Mammary epithelial cell (primary cell): ENCODE measurements at regions of chr14 and their contacts with region 1.

Region 1: GRCh38 chr14:55051426-55052268 is at the start of gene MAPK1IP1L:
- DNase-seq: peak; percentile 96
- H3K4me3 ChIP-seq: peak within 1 kb of the TSS; percentile 93 to 100 (median 97)
- H3K27ac ChIP-seq: peak within 1 kb of the TSS; percentile 99
- H3K4me1 ChIP-seq: peaks cover 22% of the 10 kb centered on the region
- H3K27me3 ChIP-seq: no peaks in the 10 kb centered on the region
- CTCF ChIP-seq: peak; percentile 87 to 96
- total RNA-seq, gene MAPK1IP1L: 48.2 to 108 TPM

Region 2: GRCh38 chr14:55026793-55027561 is 24.7 kb before region 1 on chr14 and contains the starts of genes SOCS4 and WDHD1:
- CTCF ChIA-PET with region 1: interaction called, 4 read pairs
- dilution Hi-C with region 1: no loop called
- in situ Hi-C with region 1: no loop called
- intact Hi-C with region 1: loop called (anchors 1 kb)
- DNase-seq: peak; percentile 94
- H3K4me3 ChIP-seq: peak within 1 kb of the TSS; percentile 86 to 98 (median 95)
- H3K27ac ChIP-seq: peak within 1 kb of the TSS; percentile 98
- H3K4me1 ChIP-seq: peaks cover 16% of the 10 kb centered on the region
- H3K27me3 ChIP-seq: no peaks in the 10 kb centered on the region
- CTCF ChIP-seq: no peak
- total RNA-seq, gene SOCS4: 25.2 to 35.4 TPM
- total RNA-seq, gene WDHD1: 7.7 to 21.1 TPM

Region 3: DNA sequence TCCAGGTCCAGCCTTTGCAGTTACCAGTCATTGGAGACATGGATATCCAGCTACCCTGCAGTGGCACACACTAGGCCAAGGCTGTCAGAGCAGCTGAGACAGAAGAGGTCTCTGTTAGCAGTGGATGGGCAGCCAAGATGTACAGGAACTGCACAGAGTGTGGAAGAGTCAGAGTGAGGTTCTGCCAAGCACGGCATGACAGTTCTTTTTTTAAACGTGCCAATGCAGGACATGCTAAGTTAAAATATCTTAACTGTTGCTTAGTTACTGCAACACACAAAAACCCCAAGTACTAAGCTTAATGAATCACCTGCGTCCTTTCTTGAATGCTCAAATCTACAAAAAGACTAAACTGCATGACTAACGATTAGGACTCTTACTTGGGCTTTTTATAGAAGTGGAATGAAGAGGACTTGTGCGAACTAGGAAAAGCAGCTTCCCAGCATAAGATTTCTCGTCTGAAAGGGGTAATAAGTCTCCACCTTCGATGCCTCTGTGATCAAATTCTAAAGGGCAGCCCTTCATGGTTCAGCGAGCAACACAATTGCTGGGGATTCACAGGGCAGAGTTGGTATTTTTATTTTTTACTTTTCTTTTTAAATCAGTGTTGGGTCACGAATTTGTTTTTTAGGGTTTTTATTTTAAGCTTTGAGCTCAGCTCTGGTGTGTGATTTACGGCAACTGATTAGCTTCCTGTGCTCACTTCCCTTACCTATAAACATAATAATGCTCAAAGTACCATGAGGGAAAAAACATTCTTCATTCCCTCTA is 20.4 kb after region 1 on chr14:
- CTCF ChIA-PET with region 1: interaction called, 11 read pairs
- dilution Hi-C with region 1: no loop called
- in situ Hi-C with region 1: no loop called
- intact Hi-C with region 1: loop called (anchors 1 kb)
- DNase-seq: peak; percentile 95
- H3K4me3 ChIP-seq: peak overlapping the region in 1 of 3 experiments; percentile 28
- H3K27ac ChIP-seq: peak overlapping the region; percentile 99
- H3K4me1 ChIP-seq: peaks cover 42% of the 10 kb centered on the region
- H3K27me3 ChIP-seq: no peaks in the 10 kb centered on the region
- CTCF ChIP-seq: no peak

Region 4: DNA sequence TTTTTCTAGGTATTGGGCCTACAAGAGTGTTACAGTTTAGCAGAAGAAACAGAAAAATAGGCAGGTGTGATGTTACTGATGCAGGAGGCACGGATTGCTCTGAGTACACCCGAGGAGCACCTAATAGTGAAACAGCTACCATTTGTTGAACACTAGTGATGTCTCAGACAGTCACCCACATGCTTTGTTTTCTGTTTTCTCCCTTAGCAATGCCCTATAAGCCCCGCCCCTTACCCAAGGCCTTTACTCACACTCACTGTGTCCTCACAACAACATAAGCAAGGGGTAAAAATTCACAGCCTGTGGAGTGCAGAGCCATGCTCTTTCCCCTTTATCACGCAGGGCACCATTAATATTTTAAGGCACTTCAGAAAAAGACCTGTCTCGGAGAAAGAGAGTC is 25.5 kb after region 1 on chr14:
- CTCF ChIA-PET with region 1: interaction called, 11 read pairs
- dilution Hi-C with region 1: no loop called
- in situ Hi-C with region 1: no loop called
- intact Hi-C with region 1: loop called (anchors 1 kb)
- DNase-seq: peak; percentile 83
- H3K4me3 ChIP-seq: no peak overlapping the region
- H3K27ac ChIP-seq: peak overlapping the region; percentile 100
- H3K4me1 ChIP-seq: peaks cover 42% of the 10 kb centered on the region
- H3K27me3 ChIP-seq: no peaks in the 10 kb centered on the region
- CTCF ChIP-seq: no peak

Region 5: GRCh38 chr14:55097881-55098560 is 46.4 kb after region 1 on chr14:
- CTCF ChIA-PET with region 1: no interaction called
- dilution Hi-C with region 1: no loop called
- in situ Hi-C with region 1: no loop called
- intact Hi-C with region 1: no loop called
- DNase-seq: peak; percentile 63
- H3K4me3 ChIP-seq: no peak overlapping the region
- H3K27ac ChIP-seq: no peak overlapping the region
- H3K4me1 ChIP-seq: peaks cover 15% of the 10 kb centered on the region
- H3K27me3 ChIP-seq: no peaks in the 10 kb centered on the region
- CTCF ChIP-seq: no peak

Region 6: GRCh38 chr14:55160989-55161388 is 109.3 kb after region 1 on chr14:
- CTCF ChIA-PET with region 1: interaction called, 5 read pairs
- dilution Hi-C with region 1: no loop called
- in situ Hi-C with region 1: no loop called
- intact Hi-C with region 1: loop called (anchors 1 kb)
- DNase-seq: peak; percentile 17
- H3K4me3 ChIP-seq: no peak overlapping the region
- H3K27ac ChIP-seq: peak overlapping the region; percentile 7
- H3K4me1 ChIP-seq: no peaks in the 10 kb centered on the region
- H3K27me3 ChIP-seq: no peaks in the 10 kb centered on the region
- CTCF ChIP-seq: peak; percentile 48 to 61

Region 7: GRCh38 chr14:55356913-55357312 is 305.3 kb after region 1 on chr14:
- CTCF ChIA-PET with region 1: no interaction called
- dilution Hi-C with region 1: no loop called
- in situ Hi-C with region 1: no loop called
- intact Hi-C with region 1: no loop called
- DNase-seq: no peak
- H3K4me3 ChIP-seq: no peak overlapping the region
- H3K27ac ChIP-seq: no peak overlapping the region
- H3K4me1 ChIP-seq: peaks cover 8% of the 10 kb centered on the region
- H3K27me3 ChIP-seq: no peaks in the 10 kb centered on the region
- CTCF ChIP-seq: no peak